ENCODE measurements at regions of chr11 and their contacts with region 1.

Region 1: GRCh38 chr11:65540297-65541092 is 15.6 kb downstream of the SCYL1 start:
- DNase-seq: no peak
- ATAC-seq: peak; percentile 56
- H3K4me3 ChIP-seq: no peak overlapping the region
- H3K27ac ChIP-seq: no peak overlapping the region
- H3K4me1 ChIP-seq: peaks cover 6% of the 10 kb centered on the region
- H3K27me3 ChIP-seq: no peaks in the 10 kb centered on the region
- CTCF ChIP-seq: peak; percentile 90
- EP300 ChIP-seq: no peak
- POLR2A ChIP-seq: no peak
- RAD21 ChIP-seq: peak; percentile 93

Region 2: GRCh38 chr11:65516135-65516935 is 24.2 kb before region 1 on chr11:
- CTCF ChIA-PET with region 1: no interaction called
- POLR2A ChIA-PET with region 1: no interaction called
- in situ Hi-C with region 1: no loop called
- intact Hi-C with region 1: no loop called
- DNase-seq: no peak
- ATAC-seq: peak; percentile 61
- H3K4me3 ChIP-seq: no peak overlapping the region
- H3K27ac ChIP-seq: no peak overlapping the region
- H3K4me1 ChIP-seq: peaks cover 19% of the 10 kb centered on the region
- H3K27me3 ChIP-seq: no peaks in the 10 kb centered on the region
- CTCF ChIP-seq: no peak
- EP300 ChIP-seq: no peak
- POLR2A ChIP-seq: no peak
- RAD21 ChIP-seq: no peak

Region 3: DNA sequence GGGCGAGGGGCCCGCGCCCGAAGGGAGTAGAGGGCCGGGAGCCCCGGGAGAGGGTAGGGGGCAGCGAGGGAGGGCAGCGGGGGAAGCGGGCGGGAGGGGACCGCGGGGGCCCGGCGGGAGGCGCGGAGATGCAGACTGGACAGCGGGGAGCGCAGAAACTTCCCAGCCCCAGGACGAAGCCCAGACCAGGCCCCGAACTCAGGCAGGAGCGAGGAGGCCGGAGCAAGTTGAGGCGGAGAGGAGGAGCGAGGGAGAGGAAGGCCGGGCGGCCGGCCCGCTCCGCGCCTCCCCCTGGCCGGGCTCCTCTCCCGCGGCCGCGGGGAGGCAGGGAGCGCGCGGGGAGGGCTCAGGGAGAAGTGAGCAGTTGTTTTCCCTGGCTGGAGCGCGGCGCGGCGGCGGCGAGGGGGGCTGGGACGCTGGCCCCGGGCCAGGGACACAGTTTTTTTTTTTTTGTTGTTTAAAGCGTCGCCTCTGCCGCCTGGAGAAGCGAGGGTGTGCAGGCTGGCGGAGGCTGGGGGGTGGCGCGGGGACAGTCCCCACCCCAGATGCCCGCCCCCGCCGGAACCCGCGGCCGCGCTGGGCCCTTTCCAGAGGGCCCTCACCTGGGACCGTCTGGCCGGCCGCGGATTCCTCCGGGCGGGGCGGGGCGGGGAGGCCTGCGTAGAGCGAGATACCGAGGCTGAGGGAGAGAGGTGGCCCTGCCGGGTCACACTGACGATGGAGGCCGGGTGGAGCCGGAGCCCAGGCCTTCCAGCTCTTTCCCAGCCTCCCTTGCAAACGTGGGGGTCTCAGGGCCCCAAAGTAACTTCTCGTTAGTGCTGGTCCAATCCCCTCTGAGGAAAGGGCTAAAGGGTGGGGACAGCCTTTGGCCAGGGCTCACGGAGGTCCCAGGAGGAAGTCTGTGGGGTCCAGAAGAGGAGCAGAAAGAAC is 17.8 kb after region 1 on chr11 and contains the start of gene LTBP3:
- CTCF ChIA-PET with region 1: no interaction called
- POLR2A ChIA-PET with region 1: interaction called, 7 read pairs
- in situ Hi-C with region 1: no loop called
- intact Hi-C with region 1: loop called (anchors 2 kb)
- DNase-seq: peak; percentile 68
- ATAC-seq: peak; percentile 58
- H3K4me3 ChIP-seq: peak within 1 kb of the TSS; percentile 74 to 89 (median 87)
- H3K27ac ChIP-seq: peak within 1 kb of the TSS; percentile 94
- H3K4me1 ChIP-seq: peaks cover 72% of the 10 kb centered on the region
- H3K27me3 ChIP-seq: no peaks in the 10 kb centered on the region
- CTCF ChIP-seq: no peak
- EP300 ChIP-seq: no peak
- POLR2A ChIP-seq: no peak
- RAD21 ChIP-seq: no peak
- total RNA-seq, gene LTBP3: 4.2 and 12.2 TPM in 2 replicates

Region 4: GRCh38 chr11:65569973-65570918 is 29.8 kb after region 1 on chr11 and contains the start of gene ZNRD2:
- CTCF ChIA-PET with region 1: interaction called, 7 read pairs
- POLR2A ChIA-PET with region 1: interaction called, 4 read pairs
- in situ Hi-C with region 1: no loop called
- intact Hi-C with region 1: loop called (anchors 2 kb)
- DNase-seq: peak; percentile 96
- ATAC-seq: peak; percentile 87
- H3K4me3 ChIP-seq: peak within 1 kb of the TSS; percentile 85 to 99 (median 95)
- H3K27ac ChIP-seq: peak within 1 kb of the TSS; percentile 85
- H3K4me1 ChIP-seq: peaks cover 42% of the 10 kb centered on the region
- H3K27me3 ChIP-seq: no peaks in the 10 kb centered on the region; a peak in 1 of 5 replicates
- CTCF ChIP-seq: peak; percentile 93
- EP300 ChIP-seq: no peak
- POLR2A ChIP-seq: peak in 1 of 2 experiments; percentile 52; a peak in 1 of 4 replicates
- RAD21 ChIP-seq: peak; percentile 87
- total RNA-seq, gene ZNRD2: 34.0 and 40.0 TPM in 2 replicates

Region 5: GRCh38 chr11:65588199-65589054 is 47.9 kb after region 1 on chr11:
- CTCF ChIA-PET with region 1: interaction called, 12 read pairs
- POLR2A ChIA-PET with region 1: no interaction called
- in situ Hi-C with region 1: loop called (anchors 5 kb)
- intact Hi-C with region 1: no loop called
- DNase-seq: peak; percentile 73
- ATAC-seq: peak; percentile 90
- H3K4me3 ChIP-seq: no peak overlapping the region
- H3K27ac ChIP-seq: no peak overlapping the region
- H3K4me1 ChIP-seq: peaks cover 25% of the 10 kb centered on the region
- H3K27me3 ChIP-seq: no peaks in the 10 kb centered on the region
- CTCF ChIP-seq: peak; percentile 86
- EP300 ChIP-seq: no peak
- POLR2A ChIP-seq: no peak
- RAD21 ChIP-seq: peak; percentile 84

Region 6: GRCh38 chr11:65593518-65594298 is 53.2 kb after region 1 on chr11:
- CTCF ChIA-PET with region 1: interaction called, 12 read pairs
- POLR2A ChIA-PET with region 1: no interaction called
- in situ Hi-C with region 1: loop called (anchors 5 kb)
- intact Hi-C with region 1: no loop called
- DNase-seq: no peak
- ATAC-seq: peak; percentile 66
- H3K4me3 ChIP-seq: no peak overlapping the region
- H3K27ac ChIP-seq: no peak overlapping the region
- H3K4me1 ChIP-seq: peaks cover 8% of the 10 kb centered on the region
- H3K27me3 ChIP-seq: no peaks in the 10 kb centered on the region
- CTCF ChIP-seq: peak; percentile 82
- EP300 ChIP-seq: no peak
- POLR2A ChIP-seq: no peak
- RAD21 ChIP-seq: peak; percentile 47; the same call in 1 of the 2 replicates

Region 7: GRCh38 chr11:65720237-65720934 is 179.9 kb after region 1 on chr11 and contains the start of gene RNASEH2C:
- CTCF ChIA-PET with region 1: no interaction called
- POLR2A ChIA-PET with region 1: no interaction called
- in situ Hi-C with region 1: no loop called
- intact Hi-C with region 1: no loop called
- DNase-seq: peak; percentile 65
- ATAC-seq: peak; percentile 92
- H3K4me3 ChIP-seq: peak within 1 kb of the TSS; percentile 76 to 89 (median 87)
- H3K27ac ChIP-seq: peak within 1 kb of the TSS; percentile 47
- H3K4me1 ChIP-seq: peaks cover 26% of the 10 kb centered on the region
- H3K27me3 ChIP-seq: no peaks in the 10 kb centered on the region; a peak in 1 of 5 replicates
- CTCF ChIP-seq: peak; percentile 20; the same call in 1 of the 2 replicates
- EP300 ChIP-seq: no peak
- POLR2A ChIP-seq: peak in 1 of 2 experiments; percentile 81; a peak in 2 of 4 replicates
- RAD21 ChIP-seq: peak; percentile 42
- total RNA-seq, gene RNASEH2C: 50.9 and 65.1 TPM in 2 replicates

Measured in HepG2 (cell line).